ENCODE measurements at regions of chr2 and their contacts with region 1.

Region 1: DNA sequence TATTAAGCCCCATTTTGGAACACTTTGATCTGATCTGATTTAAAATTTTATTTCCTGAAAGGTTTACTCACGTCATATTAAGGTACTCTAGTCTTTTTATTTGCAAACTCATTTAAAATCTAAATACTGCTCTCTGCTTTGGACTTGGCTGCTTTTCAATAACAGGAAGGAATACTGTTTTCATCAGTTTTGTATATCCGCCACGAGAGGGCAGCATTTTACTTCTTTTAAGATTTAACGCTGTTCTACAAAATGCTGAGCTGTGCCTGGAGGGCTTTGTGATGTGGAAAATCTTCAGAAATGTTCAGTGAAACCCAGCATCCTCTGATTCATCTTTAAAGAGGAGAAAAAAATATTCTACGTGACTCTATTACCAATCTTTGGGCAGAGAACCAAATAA is 37.5 kb upstream of the SLC38A11 start:
- DNase-seq: no peak
- H3K4me3 ChIP-seq: no peak overlapping the region
- H3K27ac ChIP-seq: no peak overlapping the region
- H3K4me1 ChIP-seq: no peaks in the 10 kb centered on the region
- H3K27me3 ChIP-seq: no peaks in the 10 kb centered on the region
- CTCF ChIP-seq: peak in 2 of 3 experiments; percentile 47 to 48; a peak in 2 of 4 replicates
- EP300 ChIP-seq: no peak
- POLR2A ChIP-seq: no peak
- RAD21 ChIP-seq: peak; percentile 74 to 80

Region 2: GRCh38 chr2:164937864-164938401 is 54.9 kb before region 1 on chr2:
- CTCF ChIA-PET with region 1: no interaction called
- POLR2A ChIA-PET with region 1: no interaction called
- DNase-seq: no peak
- H3K4me3 ChIP-seq: no peak overlapping the region
- H3K27ac ChIP-seq: no peak overlapping the region
- H3K4me1 ChIP-seq: peaks cover 0 to 2% (median 0%) of the 10 kb centered on the region in 4 experiments; a peak in 1 of 7 replicates
- H3K27me3 ChIP-seq: no peaks in the 10 kb centered on the region
- CTCF ChIP-seq: no peak
- EP300 ChIP-seq: no peak
- POLR2A ChIP-seq: no peak
- RAD21 ChIP-seq: no peak

Region 3: GRCh38 chr2:164976301-164976700 is 16.5 kb before region 1 on chr2:
- CTCF ChIA-PET with region 1: interaction called, 13 read pairs
- POLR2A ChIA-PET with region 1: no interaction called
- DNase-seq: no peak
- H3K4me3 ChIP-seq: no peak overlapping the region
- H3K27ac ChIP-seq: no peak overlapping the region
- H3K4me1 ChIP-seq: no peaks in the 10 kb centered on the region
- H3K27me3 ChIP-seq: no peaks in the 10 kb centered on the region
- CTCF ChIP-seq: no peak
- EP300 ChIP-seq: no peak
- POLR2A ChIP-seq: no peak
- RAD21 ChIP-seq: no peak

Region 4: DNA sequence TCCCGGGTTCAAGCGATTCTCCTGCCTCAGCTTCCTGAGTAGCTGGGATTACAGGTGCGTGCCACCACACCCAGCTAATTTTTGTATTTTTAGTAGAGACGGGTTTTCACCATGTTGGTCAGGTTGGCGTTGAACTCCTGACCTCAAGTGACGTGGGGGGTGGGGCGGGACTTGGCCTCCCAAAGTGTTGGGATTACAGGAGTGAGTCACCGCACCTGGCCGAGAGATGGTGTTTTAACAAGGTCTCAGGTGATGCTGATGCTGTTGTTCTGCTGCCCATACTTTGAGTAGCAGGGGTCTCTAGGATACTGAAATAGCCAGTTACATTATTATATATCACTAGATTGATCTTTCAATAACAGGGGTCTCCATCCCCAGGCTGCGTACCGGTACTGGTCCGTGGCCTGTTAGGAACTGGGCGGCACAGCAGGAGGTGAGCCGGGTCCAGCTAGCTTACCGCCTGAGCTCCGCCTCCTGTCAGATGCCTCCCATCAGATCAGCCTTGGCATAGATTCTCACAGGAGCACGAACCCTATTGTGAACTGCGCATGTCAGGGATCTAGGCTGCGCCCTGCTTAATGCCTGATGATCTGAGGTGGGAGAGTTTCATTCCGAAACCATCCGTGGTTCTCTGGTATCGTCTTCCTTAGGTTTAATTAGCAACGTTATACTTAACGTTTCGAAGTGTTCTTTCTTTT is 10.8 kb after region 1 on chr2:
- CTCF ChIA-PET with region 1: interaction called, 11 read pairs
- POLR2A ChIA-PET with region 1: no interaction called
- DNase-seq: no peak
- H3K4me3 ChIP-seq: no peak overlapping the region
- H3K27ac ChIP-seq: no peak overlapping the region
- H3K4me1 ChIP-seq: no peaks in the 10 kb centered on the region
- H3K27me3 ChIP-seq: no peaks in the 10 kb centered on the region
- CTCF ChIP-seq: no peak
- EP300 ChIP-seq: no peak
- POLR2A ChIP-seq: no peak
- RAD21 ChIP-seq: no peak